Dendritic cell treated with granulocyte-macrophage colony-stimulating factor and Interleukin-4, amounts not matched to agents 40 ng/mL and 50 ng/mL, for 4 days (primary cell): ENCODE measurements at regions of chr22 and their contacts with region 1.

Region 1: DNA sequence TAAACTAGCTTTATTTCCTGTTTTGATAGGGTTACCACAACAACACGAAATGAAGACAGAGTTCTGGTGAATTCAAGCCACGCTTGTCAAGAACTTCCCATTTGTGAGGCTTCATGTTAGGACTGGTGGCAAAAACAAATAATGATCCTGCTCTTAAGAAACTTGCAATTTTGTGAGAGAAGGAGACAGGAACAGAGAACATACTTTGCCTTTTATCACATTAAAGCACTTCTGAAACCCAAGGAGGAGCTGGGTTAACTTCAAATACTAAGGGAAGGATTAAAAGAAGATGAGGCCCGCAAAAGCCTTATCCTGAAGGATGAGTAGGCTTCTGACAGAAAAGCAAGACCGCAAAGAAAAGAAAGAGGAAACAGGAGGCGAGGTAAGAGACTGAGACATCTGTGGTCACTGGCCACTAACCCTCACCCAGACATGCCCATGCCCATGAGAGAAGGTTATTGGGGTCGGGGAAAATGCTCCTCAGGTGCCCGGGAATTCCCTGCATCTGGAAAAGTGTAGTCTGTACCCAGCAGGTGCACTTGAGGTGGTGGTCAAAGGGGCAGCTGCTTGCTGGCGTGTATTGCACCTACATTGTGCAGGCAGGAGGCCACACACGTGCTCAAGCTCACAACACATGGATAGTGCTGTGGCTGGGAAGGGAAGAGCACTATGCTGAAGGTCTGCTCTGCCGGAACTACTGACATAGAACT is 50.5 kb downstream of the MAPK1 start:
- H3K4me3 Mint-ChIP-seq: peak overlapping the region; percentile 86
- H3K27ac Mint-ChIP-seq: peak overlapping the region; percentile 99
- H3K4me1 Mint-ChIP-seq: peaks cover 69% of the 10 kb centered on the region
- H3K27me3 Mint-ChIP-seq: no peaks in the 10 kb centered on the region

Region 2: DNA sequence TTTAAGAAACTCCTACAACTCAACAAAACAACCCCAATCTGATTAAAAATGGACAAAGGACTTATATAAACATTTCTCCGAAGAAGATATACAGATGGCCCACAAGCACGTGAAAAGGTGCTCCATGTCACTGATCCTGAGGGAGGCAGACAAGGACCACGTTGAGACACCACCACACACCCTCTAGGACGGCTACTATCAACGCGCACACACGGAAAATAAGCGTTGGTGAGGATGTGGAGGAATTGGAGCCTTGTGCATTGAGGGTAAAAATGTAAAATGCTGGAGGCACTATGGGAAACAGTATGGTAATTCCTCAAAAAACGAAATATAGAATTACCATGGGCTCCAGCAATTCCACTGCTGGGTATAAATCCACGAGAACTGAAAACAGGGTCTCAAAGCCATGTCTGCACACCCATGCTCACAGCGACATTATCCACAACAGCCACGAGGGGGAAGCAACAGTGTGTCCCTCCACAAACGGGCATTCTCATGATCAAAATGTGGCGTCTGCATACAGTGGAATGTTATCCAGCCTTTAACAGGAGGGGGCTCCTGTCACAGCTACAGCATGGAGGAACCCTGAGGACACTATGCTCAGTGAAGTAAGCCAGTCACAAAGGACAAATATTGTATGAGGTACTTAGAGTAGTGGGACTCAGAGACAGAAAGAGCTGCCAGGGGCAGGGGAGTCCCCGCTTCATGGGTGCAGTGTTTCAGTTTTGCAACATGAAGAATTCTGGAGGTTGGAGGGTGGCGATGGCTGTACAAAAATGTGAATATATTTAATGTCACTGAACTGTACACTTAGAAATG is 103.8 kb before region 1 on chr22:
- intact Hi-C with region 1: no loop called
- H3K4me3 Mint-ChIP-seq: no peak overlapping the region
- H3K27ac Mint-ChIP-seq: no peak overlapping the region
- H3K4me1 Mint-ChIP-seq: peaks cover 20% of the 10 kb centered on the region
- H3K27me3 Mint-ChIP-seq: no peaks in the 10 kb centered on the region

Region 3: DNA sequence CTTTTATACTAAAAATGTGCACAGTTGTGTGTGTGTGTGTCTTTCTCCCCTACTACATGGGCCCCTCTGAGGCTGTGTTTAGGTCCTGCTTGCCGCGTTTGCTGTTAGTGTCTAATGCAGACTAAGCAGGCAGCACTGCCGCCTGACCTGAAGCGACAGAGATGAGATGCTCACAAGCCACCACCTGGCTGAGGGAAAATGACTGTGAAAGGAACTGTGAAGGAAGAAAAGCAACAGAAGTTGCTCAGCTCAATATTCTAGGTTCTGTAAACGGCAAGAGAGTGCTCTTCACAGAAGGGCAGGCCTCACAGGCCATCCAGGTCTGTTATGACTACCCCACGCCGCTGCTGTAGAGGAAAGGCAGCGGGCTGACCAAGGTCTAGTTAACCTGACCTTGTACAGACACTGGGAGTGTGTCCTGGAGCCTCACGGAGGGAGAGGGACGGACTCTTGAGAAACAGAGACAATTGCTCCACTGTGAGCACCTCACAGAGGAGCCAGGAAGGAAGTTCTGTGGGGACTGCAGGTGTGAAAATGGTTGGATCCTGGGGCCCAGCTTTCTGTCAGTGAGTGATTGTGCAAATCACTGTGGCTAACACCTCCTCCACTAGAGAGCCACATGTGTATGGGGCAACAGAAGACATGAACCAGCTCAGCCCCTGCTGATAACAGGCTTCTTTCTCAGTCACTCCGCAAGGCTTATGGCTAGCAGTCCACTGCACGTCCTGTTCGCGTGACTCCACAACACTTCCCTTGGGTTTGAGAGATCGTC is 50.1 kb before region 1 on chr22:
- intact Hi-C with region 1: no loop called
- H3K4me3 Mint-ChIP-seq: no peak overlapping the region
- H3K27ac Mint-ChIP-seq: no peak overlapping the region
- H3K4me1 Mint-ChIP-seq: peaks cover 18% of the 10 kb centered on the region
- H3K27me3 Mint-ChIP-seq: no peaks in the 10 kb centered on the region

Region 4: GRCh38 chr22:21796867-21797266 is 20.1 kb before region 1 on chr22:
- intact Hi-C with region 1: no loop called
- H3K4me3 Mint-ChIP-seq: no peak overlapping the region
- H3K27ac Mint-ChIP-seq: no peak overlapping the region
- H3K4me1 Mint-ChIP-seq: peaks cover 12% of the 10 kb centered on the region
- H3K27me3 Mint-ChIP-seq: no peaks in the 10 kb centered on the region

Region 5: DNA sequence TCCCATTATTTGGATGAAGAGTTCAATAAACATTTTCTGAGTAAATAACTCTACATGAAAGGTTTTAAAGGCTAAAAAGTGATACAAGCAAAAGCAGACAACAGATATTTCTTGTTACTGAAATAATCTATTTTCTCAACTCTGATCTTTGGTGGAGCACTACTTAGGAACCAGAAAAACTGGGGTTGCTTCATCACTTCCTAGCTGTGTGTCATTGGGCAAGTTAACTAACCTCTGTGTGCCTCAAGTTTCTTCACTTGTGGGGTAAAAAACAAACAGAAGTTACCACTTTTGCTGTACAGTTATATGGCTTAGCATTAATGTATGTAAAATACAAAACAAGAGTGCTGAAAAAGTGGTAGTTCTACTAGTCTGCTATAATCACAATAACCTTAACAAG is 44.9 kb after region 1 on chr22:
- intact Hi-C with region 1: loop called (anchors 5 kb)
- H3K4me3 Mint-ChIP-seq: no peak overlapping the region
- H3K27ac Mint-ChIP-seq: peak overlapping the region; percentile 19
- H3K4me1 Mint-ChIP-seq: peaks cover 87% of the 10 kb centered on the region
- H3K27me3 Mint-ChIP-seq: no peaks in the 10 kb centered on the region

Region 6: GRCh38 chr22:21915624-21916308 is 98.8 kb after region 1 on chr22:
- intact Hi-C with region 1: no loop called
- H3K4me3 Mint-ChIP-seq: no peak overlapping the region
- H3K27ac Mint-ChIP-seq: no peak overlapping the region
- H3K4me1 Mint-ChIP-seq: peaks cover 12% of the 10 kb centered on the region
- H3K27me3 Mint-ChIP-seq: no peaks in the 10 kb centered on the region